ENCODE measurements at regions of chr4 and their contacts with region 1.

Region 1: DNA sequence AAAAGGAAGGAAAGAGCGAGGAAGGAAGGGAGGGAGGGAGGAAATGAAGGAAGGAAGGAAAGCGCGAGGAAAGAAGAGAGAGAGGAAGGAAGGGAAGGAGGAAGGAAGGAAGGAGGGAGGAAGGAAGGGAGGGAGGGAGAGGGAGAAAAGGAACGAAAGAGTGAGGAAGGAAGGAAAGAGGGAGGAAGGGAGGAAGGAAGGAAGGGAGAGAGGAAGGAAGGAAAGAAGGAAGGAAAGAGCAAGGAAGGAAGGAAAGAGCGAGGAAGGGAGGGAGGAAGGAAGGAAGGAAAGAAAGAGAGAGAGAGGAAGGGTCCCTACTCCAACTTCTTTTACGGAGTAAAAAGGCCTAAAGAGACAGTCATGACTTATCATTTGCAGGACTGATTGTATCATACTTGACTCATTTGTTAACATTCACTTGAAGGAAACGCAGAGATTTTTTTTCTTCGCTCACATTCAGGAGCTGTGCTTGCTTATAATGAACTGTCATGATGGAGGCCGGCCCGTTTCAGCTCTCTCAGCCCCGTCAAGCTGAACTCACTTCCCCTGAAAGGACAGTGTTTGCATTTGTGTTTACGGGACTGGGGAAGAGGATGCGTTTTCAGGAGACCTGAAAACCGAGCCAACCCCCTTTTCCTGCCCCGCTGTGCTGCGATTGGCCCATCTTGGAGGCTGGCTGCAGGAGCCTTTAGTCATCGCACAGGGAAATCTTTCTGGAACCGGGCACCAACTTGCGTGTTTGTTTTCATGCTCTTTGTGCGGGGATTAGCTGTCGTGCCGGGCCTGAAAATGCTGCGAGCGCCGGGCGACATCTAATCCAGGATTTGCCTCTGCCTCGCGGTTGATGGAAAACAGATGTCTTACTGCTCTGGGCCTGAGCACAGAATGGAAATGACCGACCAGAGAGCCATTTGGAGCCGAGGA is 17.8 kb downstream of the TRIM2 start:
- DNase-seq: peak; percentile 62
- H3K4me3 Mint-ChIP-seq: peak overlapping the region; percentile 79
- H3K27ac Mint-ChIP-seq: peak overlapping the region; percentile 21
- H3K4me1 Mint-ChIP-seq: peaks cover 42% of the 10 kb centered on the region
- H3K27me3 Mint-ChIP-seq: peaks cover 7% of the 10 kb centered on the region

Region 2: GRCh38 chr4:153153339-153153871 is 68.6 kb before region 1 on chr4:
- CTCF ChIA-PET with region 1: no interaction called
- intact Hi-C with region 1: loop called (anchors 1 kb)
- DNase-seq: peak; percentile 91
- H3K4me3 Mint-ChIP-seq: peak overlapping the region; percentile 80
- H3K27ac Mint-ChIP-seq: peak overlapping the region; percentile 86
- H3K4me1 Mint-ChIP-seq: peaks cover 58% of the 10 kb centered on the region
- H3K27me3 Mint-ChIP-seq: no peaks in the 10 kb centered on the region

Region 3: DNA sequence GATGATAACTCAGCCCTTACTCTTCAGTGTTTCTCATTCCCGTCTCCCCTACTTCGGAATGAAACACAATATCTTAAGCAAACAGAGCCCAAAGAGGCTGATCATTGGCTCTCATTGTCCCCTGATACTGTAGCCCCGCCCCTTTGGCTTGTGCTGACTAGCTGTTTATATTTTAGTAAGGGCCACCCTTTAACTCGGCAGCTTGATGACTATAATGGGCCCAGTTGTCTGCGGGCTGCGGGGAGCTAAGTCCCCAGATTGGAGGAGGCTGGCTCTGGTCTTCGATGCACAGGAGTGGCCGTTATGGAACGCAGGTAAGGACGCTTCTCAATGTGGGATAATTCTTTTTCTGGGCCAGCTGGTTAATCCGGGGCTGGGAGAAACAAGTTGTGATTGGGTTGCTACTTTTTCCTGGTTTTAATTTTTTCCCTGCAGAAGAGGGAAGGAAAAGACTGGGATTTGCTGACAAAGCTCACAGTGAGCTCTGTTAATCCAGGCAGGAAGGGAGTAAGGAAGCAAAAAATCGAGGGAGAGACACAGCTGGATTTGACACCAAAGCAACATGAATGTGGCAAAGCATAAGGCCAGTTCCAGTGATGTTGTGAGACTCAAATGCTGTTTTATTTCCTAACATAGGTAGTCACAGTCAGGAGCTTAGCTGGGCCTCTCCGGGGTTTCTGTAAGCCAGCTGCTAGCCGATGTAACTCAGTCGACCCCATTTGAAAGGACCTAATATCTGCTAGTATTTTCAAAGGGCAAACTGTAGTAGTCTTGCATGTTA is 17.6 kb before region 1 on chr4 and contains the start of gene TRIM2:
- CTCF ChIA-PET with region 1: no interaction called
- intact Hi-C with region 1: loop called (anchors 1 kb)
- DNase-seq: no peak
- H3K4me3 Mint-ChIP-seq: peak within 1 kb of the TSS; percentile 39
- H3K27ac Mint-ChIP-seq: peak within 1 kb of the TSS; percentile 66
- H3K4me1 Mint-ChIP-seq: peaks cover 34% of the 10 kb centered on the region
- H3K27me3 Mint-ChIP-seq: no peaks in the 10 kb centered on the region
- total RNA-seq, gene TRIM2: 3.8 to 4.2 TPM

Region 4: GRCh38 chr4:153249199-153250041 is 27.4 kb after region 1 on chr4:
- CTCF ChIA-PET with region 1: interaction called, 5 read pairs
- intact Hi-C with region 1: loop called (anchors 1 kb)
- DNase-seq: peak; percentile 91
- H3K4me3 Mint-ChIP-seq: peak overlapping the region; percentile 83
- H3K27ac Mint-ChIP-seq: peak overlapping the region; percentile 91
- H3K4me1 Mint-ChIP-seq: peaks cover 27% of the 10 kb centered on the region
- H3K27me3 Mint-ChIP-seq: no peaks in the 10 kb centered on the region

Region 5: DNA sequence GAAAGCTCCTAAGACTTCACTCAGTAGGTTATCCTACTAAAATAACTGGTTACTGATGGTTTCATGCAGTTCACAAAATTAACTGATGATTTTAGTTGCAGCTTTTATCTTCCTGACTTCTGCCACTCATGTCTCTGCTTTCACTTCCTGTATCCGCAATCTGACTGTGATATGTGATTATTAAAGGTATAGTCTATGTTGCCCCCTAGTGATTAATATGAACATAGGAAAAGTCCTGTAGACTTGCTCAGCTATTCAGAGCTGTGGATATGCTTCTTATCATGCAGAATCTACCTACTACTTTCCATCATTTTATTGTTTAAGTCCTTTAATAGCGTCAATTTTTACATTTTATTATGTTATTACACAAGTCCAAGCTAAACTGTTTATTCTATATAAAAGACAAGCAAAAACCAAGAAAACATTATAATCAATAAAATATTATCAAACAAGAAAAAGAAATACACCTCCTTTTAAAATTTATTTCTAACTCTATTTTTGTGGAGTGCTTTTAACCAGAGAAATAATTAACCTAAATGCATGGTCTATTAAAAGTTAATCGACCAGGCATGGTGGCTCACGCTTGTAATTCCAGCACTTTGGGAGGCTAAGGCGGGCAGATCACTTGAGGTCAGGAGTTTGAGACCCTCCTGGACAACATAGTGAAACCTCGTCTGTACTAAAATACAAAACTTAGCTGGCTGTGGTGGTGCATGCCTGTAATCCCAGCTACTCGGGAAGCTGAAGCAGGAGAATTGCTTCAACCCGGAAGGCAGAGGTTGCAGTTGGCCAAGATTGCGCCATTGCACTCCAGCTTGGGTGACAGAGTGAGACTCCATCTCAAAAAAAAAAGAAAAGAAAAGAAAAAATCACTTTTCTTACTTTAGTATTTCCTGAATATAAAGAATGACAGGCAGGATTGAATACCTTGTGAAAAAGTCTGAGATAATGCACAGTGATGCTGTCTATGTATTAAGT is 421.6 kb after region 1 on chr4:
- CTCF ChIA-PET with region 1: no interaction called
- intact Hi-C with region 1: loop called (anchors 10 kb)
- DNase-seq: no peak
- H3K4me3 Mint-ChIP-seq: no peak overlapping the region
- H3K27ac Mint-ChIP-seq: no peak overlapping the region
- H3K4me1 Mint-ChIP-seq: peaks cover 17% of the 10 kb centered on the region
- H3K27me3 Mint-ChIP-seq: no peaks in the 10 kb centered on the region